Activated B cell treated with CpG ODN at 0.5 μM for 24 hours (primary cell): ENCODE measurements at regions of chr6 and their contacts with region 1.

Region 1: GRCh38 chr6:108576709-108577108 is 16.0 kb downstream of the FOXO3 start:
- DNase-seq: no peak
- ATAC-seq: no peak
- H3K4me3 Mint-ChIP-seq: no peak overlapping the region
- H3K27ac Mint-ChIP-seq: no peak overlapping the region
- H3K4me1 Mint-ChIP-seq: peaks cover 45% of the 10 kb centered on the region
- H3K27me3 Mint-ChIP-seq: no peaks in the 10 kb centered on the region
- CTCF ChIP-seq: no peak

Region 2: GRCh38 chr6:108589287-108589791 is 12.6 kb after region 1 on chr6:
- CTCF ChIA-PET with region 1: no interaction called
- POLR2A ChIA-PET with region 1: interaction called, 3 read pairs
- intact Hi-C with region 1: loop called (anchors 2 kb)
- DNase-seq: no peak
- ATAC-seq: peak; percentile 64
- H3K4me3 Mint-ChIP-seq: peak overlapping the region; percentile 32
- H3K27ac Mint-ChIP-seq: peak overlapping the region; percentile 55
- H3K4me1 Mint-ChIP-seq: peaks cover 79% of the 10 kb centered on the region
- H3K27me3 Mint-ChIP-seq: no peaks in the 10 kb centered on the region
- CTCF ChIP-seq: no peak